OCI-LY7 (cell line): ENCODE measurements at regions of chr10 and their contacts with region 1.

Region 1: GRCh38 chr10:100009793-100010676 is at the start of gene DNMBP:
- DNase-seq: peak; percentile 94
- H3K4me3 ChIP-seq: peak within 1 kb of the TSS; percentile 89
- H3K27ac ChIP-seq: peak within 1 kb of the TSS; percentile 70
- H3K4me1 ChIP-seq: peaks cover 72% of the 10 kb centered on the region
- CTCF ChIP-seq: peak; percentile 67
- total RNA-seq, gene DNMBP: 24.2 and 27.0 TPM in 2 replicates

Region 2: GRCh38 chr10:99845837-99846382 is 164.1 kb before region 1 on chr10:
- CTCF ChIA-PET with region 1: interaction called, 4 read pairs
- POLR2A ChIA-PET with region 1: interaction called, 3 read pairs
- intact Hi-C with region 1: loop called (anchors 5 kb)
- DNase-seq: peak; percentile 90
- H3K4me3 ChIP-seq: no peak overlapping the region
- H3K27ac ChIP-seq: no peak overlapping the region
- H3K4me1 ChIP-seq: peaks cover 5% of the 10 kb centered on the region
- CTCF ChIP-seq: peak; percentile 98

Region 3: DNA sequence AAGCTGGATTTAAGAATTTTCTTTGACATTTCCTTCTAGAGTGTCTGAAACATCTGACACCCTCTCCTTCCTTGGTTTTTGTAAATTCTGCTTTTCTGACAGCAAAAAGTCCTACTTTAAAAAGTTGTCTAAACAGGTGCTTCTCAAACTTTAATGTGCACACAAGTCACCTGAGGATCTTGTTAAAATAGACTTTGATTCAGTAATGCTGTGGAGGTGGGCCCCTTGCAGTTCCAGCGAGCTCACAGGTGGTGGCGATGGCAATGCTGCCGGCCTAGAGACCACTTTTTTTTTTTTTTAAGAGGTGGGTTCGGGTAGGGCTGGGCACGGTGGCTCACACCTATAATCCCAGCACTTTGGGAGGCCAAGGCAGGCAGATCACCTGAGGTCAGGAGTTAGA is 150.4 kb before region 1 on chr10:
- CTCF ChIA-PET with region 1: no interaction called
- POLR2A ChIA-PET with region 1: no interaction called
- intact Hi-C with region 1: no loop called
- DNase-seq: peak; percentile 67
- H3K4me3 ChIP-seq: no peak overlapping the region
- H3K27ac ChIP-seq: no peak overlapping the region
- H3K4me1 ChIP-seq: no peaks in the 10 kb centered on the region
- CTCF ChIP-seq: peak; percentile 79

Region 4: DNA sequence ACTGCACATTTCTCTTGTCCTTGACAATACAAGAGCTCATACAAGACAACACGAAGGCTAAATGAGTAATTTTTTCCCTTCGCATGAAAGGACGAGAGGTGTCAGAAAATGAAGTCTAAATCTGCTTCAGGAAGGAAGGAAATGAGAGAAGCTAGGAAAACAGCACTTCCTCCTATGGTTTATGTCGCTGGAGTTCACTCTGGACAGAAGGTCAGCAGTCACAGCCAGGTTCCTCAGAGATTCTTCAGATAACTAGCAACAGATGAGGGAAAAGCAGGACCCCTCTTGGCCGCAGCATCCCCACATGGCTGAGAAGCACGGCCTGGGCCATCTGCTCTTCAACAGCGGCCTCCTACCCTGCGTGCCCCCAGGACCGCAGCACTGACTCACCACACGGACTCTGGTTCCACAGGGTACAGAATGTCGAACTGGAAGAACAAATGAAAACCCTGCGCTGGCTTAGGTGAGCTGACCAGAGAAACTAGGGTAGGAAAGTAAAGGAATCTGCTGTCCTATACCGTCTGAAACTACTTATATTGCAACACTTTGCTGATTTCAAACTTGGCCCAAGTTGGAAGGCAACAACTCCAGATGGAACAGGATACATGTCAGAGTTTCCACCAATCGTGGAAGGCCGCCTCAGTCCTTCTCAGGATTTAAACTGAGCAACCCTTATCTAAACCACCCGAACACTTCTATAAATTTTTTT is 26.6 kb before region 1 on chr10:
- CTCF ChIA-PET with region 1: interaction called, 7 read pairs
- POLR2A ChIA-PET with region 1: interaction called, 21 read pairs
- intact Hi-C with region 1: no loop called
- DNase-seq: peak; percentile 27
- H3K4me3 ChIP-seq: peak overlapping the region; percentile 48
- H3K27ac ChIP-seq: peak overlapping the region; percentile 18
- H3K4me1 ChIP-seq: peaks cover 53% of the 10 kb centered on the region
- CTCF ChIP-seq: no peak

Region 5: GRCh38 chr10:99999319-100000108 is 10.5 kb before region 1 on chr10:
- CTCF ChIA-PET with region 1: interaction called, 3 read pairs
- POLR2A ChIA-PET with region 1: interaction called, 20 read pairs
- intact Hi-C with region 1: no loop called
- DNase-seq: no peak
- H3K4me3 ChIP-seq: no peak overlapping the region
- H3K27ac ChIP-seq: no peak overlapping the region
- H3K4me1 ChIP-seq: peaks cover 49% of the 10 kb centered on the region
- CTCF ChIP-seq: no peak

Region 6: DNA sequence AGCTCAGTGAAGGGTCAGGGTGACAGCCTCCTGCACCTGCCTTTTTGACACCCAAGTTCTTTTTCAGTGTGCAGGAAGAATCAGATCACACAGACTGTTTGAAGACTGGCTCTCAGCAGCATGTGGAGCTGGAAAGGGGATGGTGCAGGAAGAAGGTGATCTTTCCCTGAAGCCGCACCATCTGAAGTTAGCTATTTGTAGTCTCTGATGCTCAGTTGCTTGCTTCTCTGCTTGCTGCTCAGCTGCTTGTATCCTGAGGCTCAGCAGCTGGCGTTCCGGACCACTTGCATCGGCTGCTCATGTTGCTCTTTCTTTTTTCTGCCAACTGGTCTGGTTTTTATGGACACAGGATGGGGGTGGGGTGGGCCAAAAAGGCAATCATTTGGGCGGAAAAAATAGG is 15.5 kb after region 1 on chr10:
- CTCF ChIA-PET with region 1: interaction called, 5 read pairs
- POLR2A ChIA-PET with region 1: interaction called, 17 read pairs
- intact Hi-C with region 1: no loop called
- DNase-seq: no peak
- H3K4me3 ChIP-seq: no peak overlapping the region
- H3K27ac ChIP-seq: peak overlapping the region; percentile 42
- H3K4me1 ChIP-seq: peaks cover 37% of the 10 kb centered on the region
- CTCF ChIP-seq: no peak

Region 7: GRCh38 chr10:100185364-100186252 is 175.6 kb after region 1 on chr10 and contains the start of gene ERLIN1:
- CTCF ChIA-PET with region 1: no interaction called
- POLR2A ChIA-PET with region 1: no interaction called
- intact Hi-C with region 1: loop called (anchors 5 kb)
- DNase-seq: peak; percentile 93
- H3K4me3 ChIP-seq: peak within 1 kb of the TSS; percentile 90
- H3K27ac ChIP-seq: peak within 1 kb of the TSS; percentile 85
- H3K4me1 ChIP-seq: peaks cover 36% of the 10 kb centered on the region
- CTCF ChIP-seq: peak; percentile 57
- total RNA-seq, gene ERLIN1: 24.7 and 26.7 TPM in 2 replicates